HEK293 (cell line): ENCODE measurements at regions of chr12 and their contacts with region 1.

Region 1: GRCh38 chr12:117236456-117237001 is 46.3 kb upstream of the FBXO21 start:
- H3K4me3 ChIP-seq: no peak overlapping the region
- H3K27ac ChIP-seq: no peak overlapping the region
- H3K4me1 ChIP-seq: no peaks in the 10 kb centered on the region
- CTCF ChIP-seq: peak; percentile 31; the same call in 1 of the 2 replicates

Region 2: DNA sequence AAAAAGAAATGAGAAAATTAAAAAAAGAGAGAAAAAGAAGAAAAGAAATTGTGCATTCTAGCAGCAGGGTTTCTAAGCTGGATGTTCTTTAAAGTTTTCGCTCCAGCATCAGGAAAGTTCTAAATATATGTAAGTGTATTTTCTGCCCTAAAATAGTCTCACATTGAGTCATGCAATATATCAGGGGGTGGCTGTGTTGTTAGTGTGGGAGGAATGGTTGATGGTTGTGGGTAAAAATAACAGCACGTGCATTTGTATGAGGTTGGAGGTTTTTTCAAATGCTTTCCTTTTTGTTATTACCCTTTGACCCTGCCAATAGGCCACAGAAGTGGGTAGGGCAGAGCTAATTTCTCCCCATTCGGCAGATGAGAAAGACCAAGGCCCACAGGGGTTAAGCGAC is 18.9 kb after region 1 on chr12:
- CTCF ChIA-PET with region 1: interaction called, 19 read pairs
- POLR2A ChIA-PET with region 1: no interaction called
- H3K4me3 ChIP-seq: no peak overlapping the region
- H3K27ac ChIP-seq: no peak overlapping the region
- H3K4me1 ChIP-seq: no peaks in the 10 kb centered on the region
- CTCF ChIP-seq: no peak

Region 3: DNA sequence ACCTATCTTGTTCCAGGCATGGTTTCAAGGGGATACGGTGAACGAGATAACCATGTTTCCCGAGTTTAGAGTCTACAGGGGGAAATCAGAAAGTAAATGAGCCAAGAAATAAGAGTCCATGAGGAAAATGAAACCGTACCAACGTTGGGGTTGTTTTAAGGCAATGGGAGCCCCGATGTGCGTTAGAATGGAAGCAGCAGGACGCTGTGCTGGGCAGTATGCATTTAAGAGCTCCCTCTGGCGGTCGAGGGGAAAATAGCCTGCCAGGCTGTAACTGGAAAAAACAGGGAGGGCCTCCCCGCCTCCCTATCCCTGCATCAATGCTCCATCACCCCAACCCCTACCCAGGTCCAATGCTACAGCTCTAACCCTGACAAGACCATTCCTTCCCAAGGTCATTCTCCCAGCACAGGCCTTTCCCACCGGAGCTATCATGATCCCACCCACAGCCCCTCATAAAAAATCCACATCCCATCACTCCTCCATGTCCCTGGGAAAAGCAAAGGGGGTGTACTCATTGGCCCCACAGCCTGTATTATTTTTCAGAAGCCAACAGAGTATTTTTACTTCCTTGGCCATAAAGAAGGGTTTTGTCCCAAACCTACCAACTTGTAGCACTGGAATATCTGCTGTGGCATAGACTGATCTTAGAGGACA is 351.2 kb after region 1 on chr12:
- CTCF ChIA-PET with region 1: interaction called, 12 read pairs
- POLR2A ChIA-PET with region 1: no interaction called
- H3K4me3 ChIP-seq: no peak overlapping the region
- H3K27ac ChIP-seq: no peak overlapping the region
- H3K4me1 ChIP-seq: no peaks in the 10 kb centered on the region
- CTCF ChIP-seq: peak; percentile 77

Region 4: DNA sequence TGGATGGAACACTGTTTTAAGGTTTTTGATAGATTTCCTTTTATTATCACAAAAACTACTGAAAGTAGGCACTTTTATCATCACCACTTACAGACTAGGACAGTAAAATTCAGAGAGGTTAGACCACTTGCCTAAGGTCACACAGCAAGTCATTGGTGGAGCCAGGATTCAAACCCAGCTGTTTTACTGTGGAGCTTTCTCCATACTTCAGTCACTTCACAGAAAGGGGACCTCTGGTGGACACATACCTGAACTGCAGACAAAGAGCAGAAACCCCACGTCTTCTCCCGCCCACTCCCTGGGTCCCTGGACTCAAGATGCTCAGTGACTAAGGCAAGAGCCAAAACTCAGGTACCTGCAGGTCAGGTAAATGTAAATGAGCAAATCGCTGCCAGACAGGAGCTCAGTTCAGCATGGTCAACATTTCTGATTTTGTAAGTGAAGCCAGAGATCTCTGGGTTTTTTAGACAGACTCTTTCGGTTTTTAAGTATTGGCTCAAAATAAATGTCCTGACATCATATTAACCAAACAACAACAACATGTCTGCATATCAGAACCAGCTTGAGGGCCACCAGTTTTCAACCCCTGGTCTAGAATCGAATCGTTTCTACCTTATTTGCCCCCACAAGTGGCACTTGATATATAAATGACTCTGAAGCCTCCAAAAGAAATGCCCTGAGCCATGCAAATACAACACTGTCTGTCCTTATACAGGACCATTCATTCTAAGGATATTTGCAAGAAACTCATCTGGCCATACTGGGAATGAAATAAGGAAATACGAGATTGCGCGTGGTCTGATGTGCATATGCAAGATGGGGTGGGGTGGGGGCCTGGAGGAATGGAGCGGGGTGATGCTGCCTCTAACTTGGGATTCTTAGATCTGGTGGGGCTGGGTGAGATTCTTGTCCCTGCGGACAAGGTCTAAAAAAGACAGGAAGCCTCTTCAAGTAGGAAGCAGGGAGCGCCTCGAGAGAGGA is 621.4 kb after region 1 on chr12:
- CTCF ChIA-PET with region 1: interaction called, 24 read pairs
- POLR2A ChIA-PET with region 1: no interaction called
- H3K4me3 ChIP-seq: no peak overlapping the region
- H3K27ac ChIP-seq: no peak overlapping the region
- H3K4me1 ChIP-seq: no peaks in the 10 kb centered on the region
- CTCF ChIP-seq: 0 out of 2 replicates have a peak, but pooled peaks have one; percentile 27